Left lung (tissue), 14 donors: ENCODE measurements at regions of chr12 and their contacts with region 1.

Region 1: GRCh38 chr12:57268264-57268663 is 17.3 kb upstream of the STAC3 start:
- DNase-seq: no peak
- ATAC-seq: no peak
- H3K4me3 ChIP-seq: no peak overlapping the region
- H3K27ac ChIP-seq: peak overlapping the region in 1 of 2 donors; percentile 25
- H3K4me1 ChIP-seq: peaks cover 0 to 12% of the 10 kb centered on the region in 2 donors
- H3K27me3 ChIP-seq: no peaks in the 10 kb centered on the region
- CTCF ChIP-seq: no peak

Region 2: GRCh38 chr12:56931474-56931978 is 336.7 kb before region 1 on chr12:
- intact Hi-C with region 1: no loop called
- DNase-seq: peak in 2 of 4 donors; percentile 49 to 62
- ATAC-seq: peak; percentile 68
- H3K4me3 ChIP-seq: no peak overlapping the region
- H3K27ac ChIP-seq: peak overlapping the region in 1 of 2 donors; percentile 60
- H3K4me1 ChIP-seq: peaks cover 0 to 23% of the 10 kb centered on the region in 2 donors
- H3K27me3 ChIP-seq: no peaks in the 10 kb centered on the region
- CTCF ChIP-seq: no peak

Region 3: GRCh38 chr12:57459055-57459749 is 190.9 kb after region 1 on chr12:
- intact Hi-C with region 1: loop called in 1 of 2 experiments (anchors 10 kb)
- DNase-seq: peak; percentile 94 to 98 (median 98)
- ATAC-seq: peak; percentile 85
- H3K4me3 ChIP-seq: peak overlapping the region; percentile 68 to 69
- H3K27ac ChIP-seq: peak overlapping the region; percentile 73 to 87
- H3K4me1 ChIP-seq: peaks cover 6 to 45% of the 10 kb centered on the region in 2 donors
- H3K27me3 ChIP-seq: peaks cover 3 to 56% of the 10 kb centered on the region in 2 donors
- CTCF ChIP-seq: peak; percentile 94 to 95

Region 4: DNA sequence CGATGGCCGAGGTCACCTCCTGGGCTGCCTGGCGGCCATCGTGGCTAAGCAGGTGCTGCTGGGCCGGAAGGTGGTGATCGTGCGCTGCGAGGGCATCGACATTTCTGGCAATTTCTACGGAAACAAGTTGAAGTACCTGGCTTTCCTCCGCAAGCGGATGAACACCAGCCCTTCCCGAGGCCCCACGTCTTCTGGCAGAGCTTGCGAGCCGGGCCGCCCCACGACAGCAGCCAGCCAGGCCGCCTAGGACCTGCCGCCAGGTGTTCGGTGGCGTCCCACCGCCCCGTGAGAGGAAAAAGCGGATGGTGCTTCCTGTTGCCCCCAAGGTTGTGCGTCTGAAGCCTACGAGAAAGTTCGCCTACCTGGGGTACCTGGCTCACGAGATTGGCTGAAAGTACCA is 406.4 kb after region 1 on chr12:
- intact Hi-C with region 1: no loop called
- DNase-seq: no peak
- ATAC-seq: no peak
- H3K4me3 ChIP-seq: no peak overlapping the region
- H3K27ac ChIP-seq: no peak overlapping the region
- H3K4me1 ChIP-seq: no peaks in the 10 kb centered on the region
- H3K27me3 ChIP-seq: peaks cover 0 to 5% of the 10 kb centered on the region in 2 donors
- CTCF ChIP-seq: no peak